ENCODE measurements at regions of chr4 and their contacts with region 1.

Region 1: GRCh38 chr4:166777760-166778159 is 456.5 kb downstream of the SPOCK3 start:
- DNase-seq: no peak
- ATAC-seq: no peak
- H3K4me3 ChIP-seq: no peak overlapping the region
- H3K4me3 Mint-ChIP-seq: no peak overlapping the region
- H3K27ac ChIP-seq: no peak overlapping the region
- H3K27ac Mint-ChIP-seq: no peak overlapping the region
- H3K4me1 ChIP-seq: no peaks in the 10 kb centered on the region
- H3K4me1 Mint-ChIP-seq: no peaks in the 10 kb centered on the region
- H3K27me3 ChIP-seq: no peaks in the 10 kb centered on the region
- H3K27me3 Mint-ChIP-seq: no peaks in the 10 kb centered on the region

Region 2: DNA sequence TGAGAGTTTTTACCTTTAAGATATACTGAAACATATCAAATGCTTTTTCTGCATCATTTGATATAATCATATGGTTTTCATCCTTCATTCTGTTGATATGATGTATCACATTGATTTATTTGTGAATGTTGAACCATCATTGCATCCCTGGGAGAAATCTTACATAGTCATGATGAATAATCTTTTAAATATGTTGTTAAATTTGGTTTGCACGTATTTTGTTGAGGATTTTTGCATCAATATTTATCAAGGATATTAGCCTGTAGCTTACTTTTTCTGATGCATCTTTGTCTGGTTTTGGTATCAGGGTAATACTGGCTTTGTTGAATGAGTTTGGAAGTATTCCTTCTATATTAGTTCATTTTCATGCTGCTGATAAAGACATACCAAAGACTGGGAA is 363.3 kb before region 1 on chr4:
- CTCF ChIA-PET with region 1: no interaction called
- POLR2A ChIA-PET with region 1: no interaction called
- DNase-seq: no peak
- ATAC-seq: no peak
- H3K4me3 ChIP-seq: no peak overlapping the region
- H3K4me3 Mint-ChIP-seq: no peak overlapping the region
- H3K27ac ChIP-seq: no peak overlapping the region
- H3K27ac Mint-ChIP-seq: no peak overlapping the region
- H3K4me1 ChIP-seq: no peaks in the 10 kb centered on the region
- H3K4me1 Mint-ChIP-seq: no peaks in the 10 kb centered on the region
- H3K27me3 ChIP-seq: no peaks in the 10 kb centered on the region
- H3K27me3 Mint-ChIP-seq: no peaks in the 10 kb centered on the region

Region 3: DNA sequence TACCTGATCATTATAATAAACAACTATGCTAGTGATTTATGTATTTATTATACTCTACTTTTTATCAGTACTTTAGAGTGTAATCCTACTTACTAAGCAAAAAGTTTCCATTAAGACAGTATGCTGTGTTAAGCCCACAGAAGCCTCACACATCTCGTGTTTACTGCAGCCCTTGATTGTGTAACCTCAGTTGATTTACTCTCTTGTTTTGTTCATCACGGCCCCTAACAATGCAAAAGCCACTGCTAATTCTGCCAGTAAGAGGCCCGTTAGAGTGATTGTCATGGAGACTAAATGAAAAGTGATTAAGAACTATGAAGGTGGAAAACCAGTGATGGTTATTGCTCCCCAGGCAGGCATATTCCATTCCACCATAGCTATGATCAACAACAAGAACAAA is 20.4 kb after region 1 on chr4:
- CTCF ChIA-PET with region 1: no interaction called
- POLR2A ChIA-PET with region 1: interaction called in 1 of 2 experiments, 14 read pairs
- DNase-seq: no peak
- ATAC-seq: no peak
- H3K4me3 ChIP-seq: no peak overlapping the region
- H3K4me3 Mint-ChIP-seq: no peak overlapping the region
- H3K27ac ChIP-seq: no peak overlapping the region
- H3K27ac Mint-ChIP-seq: no peak overlapping the region
- H3K4me1 ChIP-seq: no peaks in the 10 kb centered on the region
- H3K4me1 Mint-ChIP-seq: no peaks in the 10 kb centered on the region
- H3K27me3 ChIP-seq: no peaks in the 10 kb centered on the region
- H3K27me3 Mint-ChIP-seq: no peaks in the 10 kb centered on the region

Measured in T-cell (primary cell).